Activated CD4-positive, alpha-beta memory T cell treated with anti-CD3 and anti-CD28 coated beads, Interleukin-2, amount 10 ng/mL, durations not matched to agents 7 days and 5 days (primary cell): ENCODE measurements at regions of chr7 and their contacts with region 1.

Region 1: GRCh38 chr7:106659963-106660861 is 746 bp downstream of the CCDC71L start:
- DNase-seq: peak; percentile 86
- H3K4me3 Mint-ChIP-seq: peak overlapping the region; percentile 76
- H3K27ac Mint-ChIP-seq: peak overlapping the region; percentile 77
- H3K4me1 Mint-ChIP-seq: peaks cover 29% of the 10 kb centered on the region
- H3K27me3 Mint-ChIP-seq: peaks cover 3% of the 10 kb centered on the region

Region 2: GRCh38 chr7:106542550-106543220 is 117.5 kb before region 1 on chr7:
- CTCF ChIA-PET with region 1: interaction called, 29 read pairs
- POLR2A ChIA-PET with region 1: no interaction called
- DNase-seq: peak; percentile 52
- H3K4me3 Mint-ChIP-seq: no peak overlapping the region
- H3K27ac Mint-ChIP-seq: no peak overlapping the region
- H3K4me1 Mint-ChIP-seq: peaks cover 17% of the 10 kb centered on the region
- H3K27me3 Mint-ChIP-seq: no peaks in the 10 kb centered on the region

Region 3: DNA sequence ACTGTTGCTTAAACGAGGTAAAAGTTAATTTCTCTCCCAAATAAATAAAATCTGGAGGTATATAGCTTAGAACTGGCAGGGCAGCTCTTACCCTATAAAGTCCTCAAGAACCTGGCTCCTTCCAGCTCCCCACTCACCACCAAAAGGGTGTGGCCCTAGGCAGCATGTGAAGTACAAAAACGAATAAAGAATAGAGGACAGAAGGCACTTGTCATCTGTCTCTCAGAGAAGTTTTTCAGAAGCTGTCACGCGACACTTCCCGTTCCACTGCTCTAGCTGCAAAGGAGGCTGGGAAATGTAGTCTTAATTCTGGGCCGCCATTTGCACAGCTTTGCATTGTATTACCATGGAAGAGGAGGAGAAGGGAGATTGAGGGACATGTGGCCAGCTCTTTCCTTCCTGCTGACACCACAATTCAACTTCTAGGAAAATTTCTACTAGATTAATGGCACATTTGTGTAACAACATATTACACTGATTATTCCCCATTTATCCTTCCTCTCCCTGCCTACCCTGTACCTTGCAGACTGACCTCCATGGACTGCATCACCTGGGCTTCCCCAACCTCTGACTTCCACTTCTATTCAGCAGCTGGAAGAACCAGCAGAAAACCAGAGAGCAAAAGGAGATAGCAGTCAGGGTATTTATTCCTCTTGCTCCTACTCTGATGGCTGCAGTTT is 61.4 kb before region 1 on chr7:
- CTCF ChIA-PET with region 1: interaction called, 9 read pairs
- POLR2A ChIA-PET with region 1: interaction called, 11 read pairs
- DNase-seq: peak; percentile 77
- H3K4me3 Mint-ChIP-seq: no peak overlapping the region
- H3K27ac Mint-ChIP-seq: no peak overlapping the region
- H3K4me1 Mint-ChIP-seq: peaks cover 10% of the 10 kb centered on the region
- H3K27me3 Mint-ChIP-seq: peaks cover 3% of the 10 kb centered on the region

Region 4: DNA sequence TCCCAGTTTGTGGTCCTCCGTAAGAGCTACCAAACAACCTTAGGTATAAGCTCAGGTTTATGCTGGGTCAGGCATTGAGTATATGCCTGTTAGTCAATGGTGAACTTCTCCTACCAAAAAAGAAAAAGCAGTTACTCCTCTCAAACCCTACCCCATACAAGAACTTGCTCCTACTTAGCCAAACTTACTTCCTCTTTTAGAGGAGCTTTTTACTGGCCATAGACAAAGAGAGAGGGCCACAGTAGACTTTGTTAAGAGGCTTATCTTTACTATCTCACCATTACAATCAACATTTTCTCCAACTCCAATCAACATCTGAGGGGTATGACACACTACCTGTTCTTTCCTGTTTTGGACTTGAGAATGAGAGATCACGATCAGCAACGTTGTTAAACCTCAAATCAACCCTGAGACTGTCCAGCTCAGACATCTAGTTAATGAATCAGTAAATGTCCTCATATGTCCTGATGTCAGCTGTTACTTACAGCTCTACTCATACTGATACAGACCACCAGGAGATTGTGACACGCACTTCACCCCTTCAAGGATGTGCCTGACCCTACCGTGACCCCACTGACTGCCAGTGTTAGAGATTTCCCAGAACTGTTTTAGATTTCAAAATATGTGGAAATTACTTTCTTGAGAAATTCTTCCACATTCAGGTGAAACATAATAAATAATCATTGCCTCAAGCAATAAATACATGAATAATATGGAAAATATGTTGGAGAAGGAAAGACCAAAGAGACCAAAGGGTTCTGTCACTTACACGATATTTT is 19.1 kb after region 1 on chr7:
- CTCF ChIA-PET with region 1: interaction called, 19 read pairs
- POLR2A ChIA-PET with region 1: interaction called, 7 read pairs
- DNase-seq: peak; percentile 36
- H3K4me3 Mint-ChIP-seq: no peak overlapping the region
- H3K27ac Mint-ChIP-seq: peak overlapping the region; percentile 36
- H3K4me1 Mint-ChIP-seq: peaks cover 19% of the 10 kb centered on the region
- H3K27me3 Mint-ChIP-seq: no peaks in the 10 kb centered on the region

Region 5: DNA sequence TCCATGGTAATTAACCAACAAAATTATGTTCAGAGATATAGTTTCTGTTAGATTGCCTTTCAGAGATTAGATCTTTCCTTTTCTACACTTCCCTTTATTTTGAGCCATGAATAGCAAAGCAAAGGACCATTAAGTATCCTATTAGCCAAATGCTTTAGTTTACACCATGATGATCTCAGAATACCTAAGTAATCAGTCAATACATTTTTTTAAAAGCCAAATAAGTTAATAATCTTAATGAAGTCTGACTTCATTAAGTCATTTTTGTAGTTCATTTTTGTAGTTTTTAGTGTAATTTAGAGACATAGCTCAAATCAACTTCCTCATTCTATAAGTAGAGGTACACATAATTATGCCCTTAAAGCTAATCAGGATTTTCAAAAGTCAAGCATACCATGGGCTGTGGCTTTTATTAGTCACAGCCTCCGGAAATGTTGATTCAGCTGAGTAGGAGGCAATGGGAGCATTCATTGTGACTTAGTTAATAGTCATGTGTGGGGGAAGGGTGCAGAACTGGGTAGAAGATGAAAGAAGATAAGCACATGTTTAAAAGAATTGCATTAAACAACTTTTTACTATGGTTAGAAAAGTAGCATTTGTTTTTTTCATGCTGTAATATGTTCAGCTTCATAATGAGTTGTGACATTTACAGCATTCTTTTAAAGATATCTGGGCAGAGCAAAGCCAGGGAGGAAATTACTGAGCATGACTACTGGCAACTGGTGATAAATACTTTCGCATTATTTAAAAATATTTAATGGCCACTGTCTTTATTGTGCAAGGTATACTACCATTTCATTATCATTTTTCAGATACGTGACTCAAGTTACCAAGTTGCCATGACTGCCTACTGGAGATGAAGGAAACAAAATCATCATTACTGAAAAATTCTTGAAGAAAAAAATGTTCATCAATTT is 58.0 kb after region 1 on chr7:
- CTCF ChIA-PET with region 1: interaction called, 39 read pairs
- POLR2A ChIA-PET with region 1: interaction called, 19 read pairs
- DNase-seq: peak; percentile 75
- H3K4me3 Mint-ChIP-seq: no peak overlapping the region
- H3K27ac Mint-ChIP-seq: no peak overlapping the region
- H3K4me1 Mint-ChIP-seq: peaks cover 20% of the 10 kb centered on the region
- H3K27me3 Mint-ChIP-seq: no peaks in the 10 kb centered on the region

Region 6: DNA sequence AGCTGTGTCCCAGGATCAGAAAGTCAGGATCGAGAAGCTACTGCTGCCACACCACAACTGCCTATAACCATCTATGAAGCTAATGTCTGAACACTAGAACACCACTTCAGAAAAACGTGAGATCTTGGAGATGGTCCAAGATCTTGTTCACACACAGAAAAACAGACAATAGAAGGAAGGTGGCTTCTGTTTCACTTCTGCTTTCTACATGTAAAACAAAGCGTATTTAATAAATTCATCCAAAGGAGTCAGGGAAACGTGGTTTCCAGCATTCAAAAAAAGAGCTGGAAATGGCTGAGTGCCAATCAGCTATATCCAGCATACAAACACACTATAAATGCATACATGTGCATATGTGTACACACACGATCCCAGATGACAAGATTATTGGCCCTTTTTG is 71.0 kb after region 1 on chr7:
- CTCF ChIA-PET with region 1: interaction called, 146 read pairs
- POLR2A ChIA-PET with region 1: interaction called, 56 read pairs
- DNase-seq: no peak
- H3K4me3 Mint-ChIP-seq: no peak overlapping the region
- H3K27ac Mint-ChIP-seq: no peak overlapping the region
- H3K4me1 Mint-ChIP-seq: peaks cover 32% of the 10 kb centered on the region
- H3K27me3 Mint-ChIP-seq: no peaks in the 10 kb centered on the region

Region 7: DNA sequence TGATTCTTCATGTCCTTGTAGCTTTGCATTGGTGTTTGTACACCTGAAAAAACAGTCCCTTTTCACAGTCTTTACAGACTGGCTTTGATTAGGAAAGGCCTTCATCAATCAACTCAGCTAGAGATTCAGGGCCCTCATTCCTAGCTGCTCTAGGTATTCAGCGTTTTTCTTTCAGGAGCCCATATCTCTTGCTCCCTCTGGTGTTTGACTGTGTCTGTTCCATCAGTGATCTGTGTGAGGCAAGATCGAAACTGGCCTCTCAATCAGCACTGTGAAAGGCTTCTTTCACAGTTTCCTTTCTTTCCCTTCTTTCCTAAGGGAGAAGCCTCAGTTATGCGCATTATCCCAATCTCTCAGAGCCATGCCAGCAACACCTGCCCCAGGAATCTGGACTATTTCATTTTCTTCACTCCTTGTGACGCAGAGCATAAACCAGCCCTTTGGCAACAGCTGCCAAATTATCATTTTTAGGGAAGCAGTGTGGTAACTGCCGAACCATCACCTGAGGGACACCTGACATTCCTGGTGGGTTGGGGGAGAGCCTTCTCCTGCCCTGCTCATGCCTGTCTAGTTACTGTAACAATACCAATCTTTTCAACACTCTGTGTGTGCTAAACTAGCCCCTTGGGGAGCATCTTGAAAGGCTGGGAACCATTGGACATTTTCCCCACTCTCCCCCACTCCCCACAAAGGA is 76.4 kb after region 1 on chr7:
- CTCF ChIA-PET with region 1: interaction called, 146 read pairs
- POLR2A ChIA-PET with region 1: interaction called, 56 read pairs
- DNase-seq: peak; percentile 46
- H3K4me3 Mint-ChIP-seq: no peak overlapping the region
- H3K27ac Mint-ChIP-seq: no peak overlapping the region
- H3K4me1 Mint-ChIP-seq: peaks cover 31% of the 10 kb centered on the region
- H3K27me3 Mint-ChIP-seq: no peaks in the 10 kb centered on the region